A549 (cell line): ENCODE measurements at regions of chr5 and their contacts with region 1.

Region 1: GRCh38 chr5:175867587-175868347 is 3.6 kb upstream of the CPLX2 start:
- DNase-seq: peak; percentile 95 to 96
- ATAC-seq: peak; percentile 55 to 64
- H3K4me3 ChIP-seq: peak overlapping the region; percentile 82
- H3K27ac ChIP-seq: peak overlapping the region; percentile 97 to 99
- H3K4me1 ChIP-seq: peaks cover 78% of the 10 kb centered on the region
- CTCF ChIP-seq: peak; percentile 52
- EP300 ChIP-seq: peak; percentile 93; a peak in 4 of 5 replicates
- POLR2A ChIP-seq: no peak
- RAD21 ChIP-seq: peak; percentile 80

Region 2: GRCh38 chr5:175847503-175847902 is 20.3 kb before region 1 on chr5:
- CTCF ChIA-PET with region 1: interaction called, 28 read pairs
- POLR2A ChIA-PET with region 1: interaction called, 5 read pairs
- DNase-seq: peak; percentile 82 to 84
- ATAC-seq: peak; percentile 67 to 86
- H3K4me3 ChIP-seq: no peak overlapping the region
- H3K27ac ChIP-seq: peak overlapping the region; percentile 97 to 99
- H3K4me1 ChIP-seq: peaks cover 91% of the 10 kb centered on the region
- CTCF ChIP-seq: peak; percentile 45
- EP300 ChIP-seq: no peak
- POLR2A ChIP-seq: no peak
- RAD21 ChIP-seq: peak; percentile 66 to 72

Region 3: DNA sequence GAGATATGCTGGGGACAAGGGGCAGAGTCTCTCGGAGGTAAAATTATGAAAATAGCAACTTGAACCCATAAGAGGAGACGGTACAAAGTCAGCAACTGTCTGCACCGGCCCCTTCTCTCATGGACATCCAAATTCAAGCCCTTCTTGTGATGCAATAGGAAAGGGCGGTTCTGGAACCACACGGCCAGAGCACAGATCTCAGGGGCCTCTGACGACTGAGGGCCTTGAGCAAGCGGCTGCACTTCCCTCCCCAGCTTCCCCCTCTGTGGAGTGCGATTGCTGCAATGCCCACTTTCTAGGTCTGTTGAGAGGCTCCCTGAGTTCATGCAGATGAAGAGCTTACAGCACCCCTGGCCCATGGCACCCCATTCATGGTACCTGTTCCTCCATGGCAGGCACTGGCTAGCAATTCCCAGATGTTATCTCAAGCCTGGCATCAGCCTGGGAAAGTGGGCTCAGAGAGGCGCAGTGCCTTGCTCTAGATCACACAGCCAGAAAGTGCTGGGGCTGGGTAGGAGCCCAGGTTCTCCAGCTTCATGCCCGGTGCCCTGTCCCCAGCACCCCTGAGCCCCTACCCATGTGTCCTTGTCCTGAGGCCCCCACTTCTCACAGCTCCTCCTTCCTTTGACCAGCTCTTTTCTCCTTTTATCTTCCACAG is 14.1 kb before region 1 on chr5:
- CTCF ChIA-PET with region 1: interaction called, 38 read pairs
- POLR2A ChIA-PET with region 1: interaction called, 7 read pairs
- DNase-seq: peak in 1 of 2 experiments; percentile 82
- ATAC-seq: peak; percentile 52; a peak in 5 of 6 replicates
- H3K4me3 ChIP-seq: no peak overlapping the region
- H3K27ac ChIP-seq: peak overlapping the region; percentile 97 to 99
- H3K4me1 ChIP-seq: peaks cover 85% of the 10 kb centered on the region
- CTCF ChIP-seq: no peak
- EP300 ChIP-seq: peak; percentile 43 to 47; a peak in 3 of 5 replicates
- POLR2A ChIP-seq: no peak
- RAD21 ChIP-seq: no peak

Region 4: DNA sequence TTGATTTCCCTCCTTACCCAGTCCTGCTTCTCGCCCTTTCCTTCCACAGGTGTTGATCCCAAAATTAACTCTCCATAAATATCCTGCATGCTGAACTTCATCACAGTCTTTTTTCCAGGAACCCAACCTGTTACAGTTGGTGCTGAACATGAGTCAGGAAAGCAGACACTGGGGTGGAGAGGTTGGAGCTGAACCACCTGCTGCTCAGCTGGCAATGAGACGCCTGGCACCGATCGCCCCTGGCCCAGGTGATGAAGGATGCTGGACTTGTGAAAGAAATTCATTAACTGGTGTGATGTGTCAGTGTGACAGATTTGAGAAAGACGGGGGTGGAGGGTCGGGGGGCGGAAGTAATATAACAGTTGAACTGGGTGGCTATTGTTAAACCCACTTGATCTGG is 34.3 kb after region 1 on chr5:
- CTCF ChIA-PET with region 1: no interaction called
- POLR2A ChIA-PET with region 1: no interaction called
- DNase-seq: no peak
- ATAC-seq: no peak
- H3K4me3 ChIP-seq: no peak overlapping the region
- H3K27ac ChIP-seq: 0 out of 6 replicates have a peak overlapping the region, but pooled peaks of 1 of the 2 experiments have one; percentile 2
- H3K4me1 ChIP-seq: no peaks in the 10 kb centered on the region
- CTCF ChIP-seq: no peak
- EP300 ChIP-seq: no peak
- POLR2A ChIP-seq: no peak
- RAD21 ChIP-seq: no peak